Panc1 (cell line): ENCODE measurements at regions of chr11 and their contacts with region 1.

Region 1: DNA sequence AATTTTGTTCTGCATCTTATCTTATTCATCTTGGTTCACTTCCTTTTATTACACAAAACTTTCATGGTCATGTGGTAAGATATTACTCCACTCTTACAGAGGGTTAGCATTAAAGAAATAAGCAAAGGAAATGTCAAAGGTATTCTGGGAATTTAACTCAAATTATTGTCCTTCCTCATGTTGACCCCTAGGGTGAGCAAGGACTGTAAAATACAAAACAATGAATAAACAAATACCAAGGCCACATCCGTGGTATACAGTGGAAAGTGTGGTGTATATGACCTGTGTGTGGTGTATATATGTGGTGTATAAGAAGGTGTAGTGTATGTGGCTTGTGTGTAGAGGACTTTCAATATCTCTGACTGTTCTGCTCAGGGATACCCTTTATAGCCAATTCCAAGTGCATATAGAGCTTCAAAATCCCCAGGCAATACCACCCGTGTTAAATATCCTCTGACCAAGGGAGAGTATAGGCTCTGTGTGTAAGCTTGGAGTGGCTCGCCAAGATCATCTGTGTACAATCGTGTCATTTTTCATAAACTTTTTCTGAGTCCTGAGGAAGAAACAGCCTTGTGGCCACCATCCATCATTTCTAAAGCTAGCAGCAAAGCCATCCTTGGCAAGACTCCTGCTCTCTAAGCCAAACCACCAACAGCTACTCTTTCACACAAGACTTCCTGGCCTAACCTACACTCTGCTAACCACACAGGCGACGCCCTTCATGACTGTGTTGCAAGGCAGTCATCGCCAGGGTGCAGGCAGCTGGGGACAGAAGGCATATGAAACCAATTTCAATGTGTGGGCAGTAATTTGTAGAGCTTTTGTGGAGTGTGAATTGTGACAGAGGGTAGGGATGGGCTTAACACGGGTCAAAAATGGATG is 548.0 kb downstream of the ETS1 start:
- DNase-seq: no peak
- ATAC-seq: 0 out of 2 replicates have a peak, but pooled peaks have one; percentile 48
- H3K4me3 ChIP-seq: no peak overlapping the region
- H3K27ac ChIP-seq: no peak overlapping the region
- H3K4me1 ChIP-seq: no peaks in the 10 kb centered on the region; the same call in 1 of the 2 replicates
- H3K27me3 ChIP-seq: no peaks in the 10 kb centered on the region; the same call in 1 of the 2 replicates
- CTCF ChIP-seq: no peak; the same call in 1 of the 2 replicates

Region 2: GRCh38 chr11:128279866-128280265 is 240.5 kb after region 1 on chr11:
- CTCF ChIA-PET with region 1: no interaction called
- POLR2A ChIA-PET with region 1: no interaction called
- in situ Hi-C with region 1: no loop called
- intact Hi-C with region 1: loop called (anchors 10 kb)
- DNase-seq: peak; percentile 61
- ATAC-seq: peak; percentile 63
- H3K4me3 ChIP-seq: no peak overlapping the region
- H3K27ac ChIP-seq: no peak overlapping the region
- H3K4me1 ChIP-seq: no peaks in the 10 kb centered on the region
- H3K27me3 ChIP-seq: no peaks in the 10 kb centered on the region
- CTCF ChIP-seq: no peak

Region 3: DNA sequence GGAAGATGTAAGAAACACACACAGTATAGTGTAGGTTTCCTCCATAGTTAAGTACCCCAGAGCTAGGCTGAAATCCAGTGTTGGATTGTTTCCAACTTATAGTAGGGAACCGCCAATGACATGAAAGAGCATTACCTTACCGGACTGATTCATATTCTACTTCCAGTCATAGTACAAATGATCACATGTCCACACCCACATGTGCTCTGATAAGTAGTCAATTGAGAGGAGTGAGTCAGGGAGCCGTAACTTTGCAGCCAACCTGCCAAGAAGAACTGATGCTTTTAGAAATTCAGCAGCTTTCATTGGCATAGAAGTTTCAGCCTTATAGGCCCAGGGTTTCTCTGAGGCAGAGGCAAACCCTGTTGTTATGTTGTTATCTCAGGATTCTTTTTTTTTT is 307.4 kb after region 1 on chr11:
- CTCF ChIA-PET with region 1: no interaction called
- POLR2A ChIA-PET with region 1: no interaction called
- in situ Hi-C with region 1: no loop called
- intact Hi-C with region 1: no loop called
- DNase-seq: no peak
- ATAC-seq: no peak
- H3K4me3 ChIP-seq: no peak overlapping the region
- H3K27ac ChIP-seq: no peak overlapping the region
- H3K4me1 ChIP-seq: no peaks in the 10 kb centered on the region
- H3K27me3 ChIP-seq: no peaks in the 10 kb centered on the region
- CTCF ChIP-seq: no peak

Region 4: GRCh38 chr11:128506999-128507611 is 467.7 kb after region 1 on chr11:
- CTCF ChIA-PET with region 1: no interaction called
- POLR2A ChIA-PET with region 1: no interaction called
- in situ Hi-C with region 1: no loop called
- intact Hi-C with region 1: loop called (anchors 10 kb)
- DNase-seq: no peak
- ATAC-seq: peak; percentile 79
- H3K4me3 ChIP-seq: peak overlapping the region; percentile 29 to 58
- H3K27ac ChIP-seq: peak overlapping the region; percentile 96
- H3K4me1 ChIP-seq: peaks cover 100% of the 10 kb centered on the region
- H3K27me3 ChIP-seq: no peaks in the 10 kb centered on the region
- CTCF ChIP-seq: no peak

Region 5: GRCh38 chr11:128624269-128625175 is 585.1 kb after region 1 on chr11:
- CTCF ChIA-PET with region 1: no interaction called
- POLR2A ChIA-PET with region 1: interaction called, 10 read pairs
- in situ Hi-C with region 1: no loop called
- intact Hi-C with region 1: loop called (anchors 2 kb)
- DNase-seq: no peak
- ATAC-seq: no peak
- H3K4me3 ChIP-seq: no peak overlapping the region
- H3K27ac ChIP-seq: no peak overlapping the region
- H3K4me1 ChIP-seq: no peaks in the 10 kb centered on the region
- H3K27me3 ChIP-seq: no peaks in the 10 kb centered on the region
- CTCF ChIP-seq: no peak

Region 6: GRCh38 chr11:128848815-128849455 is 809.6 kb after region 1 on chr11:
- CTCF ChIA-PET with region 1: no interaction called
- POLR2A ChIA-PET with region 1: no interaction called
- in situ Hi-C with region 1: no loop called
- intact Hi-C with region 1: loop called (anchors 5 kb)
- DNase-seq: no peak
- ATAC-seq: peak; percentile 95
- H3K4me3 ChIP-seq: no peak overlapping the region
- H3K27ac ChIP-seq: no peak overlapping the region
- H3K4me1 ChIP-seq: no peaks in the 10 kb centered on the region
- H3K27me3 ChIP-seq: peaks cover under 1% of the 10 kb centered on the region; the same call in 1 of the 2 replicates
- CTCF ChIP-seq: peak; percentile 92